Dendritic cell treated with granulocyte-macrophage colony-stimulating factor and Interleukin-4, amounts not matched to agents 40 ng/mL and 50 ng/mL, for 4 days (primary cell): ENCODE measurements at regions of chr3 and their contacts with region 1.

Region 1: GRCh38 chr3:177190756-177191681 is 6.3 kb downstream of the TBL1XR1 start:
- H3K4me3 Mint-ChIP-seq: no peak overlapping the region
- H3K27ac Mint-ChIP-seq: peak overlapping the region; percentile 60
- H3K4me1 Mint-ChIP-seq: peaks cover 63% of the 10 kb centered on the region
- H3K27me3 Mint-ChIP-seq: no peaks in the 10 kb centered on the region

Region 2: GRCh38 chr3:177057768-177058167 is 133.3 kb before region 1 on chr3:
- intact Hi-C with region 1: loop called (anchors 5 kb)
- H3K4me3 Mint-ChIP-seq: no peak overlapping the region
- H3K27ac Mint-ChIP-seq: no peak overlapping the region
- H3K4me1 Mint-ChIP-seq: no peaks in the 10 kb centered on the region
- H3K27me3 Mint-ChIP-seq: no peaks in the 10 kb centered on the region

Region 3: DNA sequence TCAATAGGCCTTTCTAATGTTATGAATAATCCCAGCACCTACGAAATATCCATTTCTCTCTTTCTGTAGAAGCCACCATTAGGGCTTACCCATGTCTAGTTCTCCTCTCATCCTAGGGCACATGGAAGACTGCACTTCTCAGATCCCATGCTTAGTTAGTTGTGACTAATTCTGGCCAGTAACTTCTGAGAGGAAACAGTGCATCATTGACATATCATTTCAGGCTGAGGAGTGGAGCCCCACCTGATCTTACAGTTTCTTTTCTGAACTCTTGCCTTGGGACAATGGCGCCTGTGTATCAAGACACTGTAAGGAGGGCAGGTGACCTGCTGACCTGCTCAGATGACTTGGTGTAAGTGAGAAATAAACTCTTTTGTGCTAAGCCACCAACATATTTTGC is 45.7 kb after region 1 on chr3:
- intact Hi-C with region 1: no loop called
- H3K4me3 Mint-ChIP-seq: no peak overlapping the region
- H3K27ac Mint-ChIP-seq: peak overlapping the region; percentile 37
- H3K4me1 Mint-ChIP-seq: peaks cover 7% of the 10 kb centered on the region
- H3K27me3 Mint-ChIP-seq: no peaks in the 10 kb centered on the region